A549 (cell line): ENCODE measurements at regions of chr3 and their contacts with region 1.

Region 1: DNA sequence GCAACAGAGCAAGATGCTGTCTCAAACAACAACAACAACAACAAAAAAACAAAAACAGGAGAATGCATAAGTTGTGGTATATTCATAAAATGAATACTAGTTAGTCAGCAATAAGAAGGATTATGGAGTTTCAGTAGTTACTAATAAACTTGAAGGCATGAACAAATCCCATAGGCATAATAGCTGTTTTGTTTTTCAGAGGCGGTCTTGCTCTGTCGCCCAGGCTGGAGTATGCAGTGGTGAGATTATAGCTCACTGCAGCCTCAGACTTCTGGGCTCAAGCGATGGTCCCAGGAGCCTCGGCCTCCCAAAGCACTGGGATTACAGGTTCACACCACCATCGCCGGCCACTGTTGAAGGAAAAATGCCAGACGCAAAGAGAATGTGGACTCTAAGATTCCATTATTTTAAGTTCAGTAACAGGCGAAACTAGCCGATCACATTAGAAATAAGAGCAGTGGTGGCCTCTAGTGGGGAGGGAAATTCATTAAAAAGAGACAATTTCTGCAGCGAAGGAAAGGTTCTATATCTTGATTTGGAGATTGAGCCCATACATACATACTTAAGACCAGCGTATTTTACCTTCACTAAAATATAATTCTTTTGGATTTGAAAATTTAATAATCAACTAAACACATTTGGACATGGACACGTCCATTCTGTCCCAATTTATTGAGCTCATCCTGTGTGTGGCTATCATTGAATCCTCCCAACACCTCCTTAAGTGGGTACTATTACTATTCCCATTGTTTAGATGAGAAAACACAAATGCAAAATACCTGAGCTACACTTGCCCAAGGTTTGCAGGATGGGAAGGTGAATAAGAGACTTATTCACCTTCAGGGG is 27.4 kb upstream of the HDAC11 start:
- DNase-seq: peak; percentile 55 to 66
- ATAC-seq: peak; percentile 70 to 74
- H3K4me3 ChIP-seq: peak overlapping the region; percentile 55
- H3K27ac ChIP-seq: peak overlapping the region; percentile 72 to 86
- H3K4me1 ChIP-seq: 0 out of 3 replicates have a peak, but pooled peaks cover 5% of the 10 kb centered on the region
- CTCF ChIP-seq: peak; percentile 85
- EP300 ChIP-seq: no peak
- POLR2A ChIP-seq: no peak
- RAD21 ChIP-seq: peak; percentile 83 to 84

Region 2: GRCh38 chr3:13282986-13283876 is 169.5 kb before region 1 on chr3:
- CTCF ChIA-PET with region 1: interaction called, 29 read pairs
- POLR2A ChIA-PET with region 1: no interaction called
- DNase-seq: peak; percentile 63 to 64
- ATAC-seq: peak; percentile 63 to 74
- H3K4me3 ChIP-seq: peak overlapping the region; percentile 83
- H3K27ac ChIP-seq: peak overlapping the region; percentile 71 to 83
- H3K4me1 ChIP-seq: peaks cover 6% of the 10 kb centered on the region; the same call in 1 of the 3 replicates
- CTCF ChIP-seq: peak; percentile 32; the same call in 2 of the 3 replicates
- EP300 ChIP-seq: no peak
- POLR2A ChIP-seq: no peak
- RAD21 ChIP-seq: peak; percentile 27 to 38; a peak in 3 of 5 replicates

Region 3: GRCh38 chr3:13379201-13379830 is 73.4 kb before region 1 on chr3:
- CTCF ChIA-PET with region 1: interaction called, 10 read pairs
- POLR2A ChIA-PET with region 1: no interaction called
- DNase-seq: no peak
- ATAC-seq: peak in 1 of 2 experiments; percentile 36; a peak in 2 of 6 replicates
- H3K4me3 ChIP-seq: no peak overlapping the region
- H3K27ac ChIP-seq: no peak overlapping the region
- H3K4me1 ChIP-seq: no peaks in the 10 kb centered on the region
- CTCF ChIP-seq: no peak
- EP300 ChIP-seq: no peak
- POLR2A ChIP-seq: no peak
- RAD21 ChIP-seq: no peak

Region 4: DNA sequence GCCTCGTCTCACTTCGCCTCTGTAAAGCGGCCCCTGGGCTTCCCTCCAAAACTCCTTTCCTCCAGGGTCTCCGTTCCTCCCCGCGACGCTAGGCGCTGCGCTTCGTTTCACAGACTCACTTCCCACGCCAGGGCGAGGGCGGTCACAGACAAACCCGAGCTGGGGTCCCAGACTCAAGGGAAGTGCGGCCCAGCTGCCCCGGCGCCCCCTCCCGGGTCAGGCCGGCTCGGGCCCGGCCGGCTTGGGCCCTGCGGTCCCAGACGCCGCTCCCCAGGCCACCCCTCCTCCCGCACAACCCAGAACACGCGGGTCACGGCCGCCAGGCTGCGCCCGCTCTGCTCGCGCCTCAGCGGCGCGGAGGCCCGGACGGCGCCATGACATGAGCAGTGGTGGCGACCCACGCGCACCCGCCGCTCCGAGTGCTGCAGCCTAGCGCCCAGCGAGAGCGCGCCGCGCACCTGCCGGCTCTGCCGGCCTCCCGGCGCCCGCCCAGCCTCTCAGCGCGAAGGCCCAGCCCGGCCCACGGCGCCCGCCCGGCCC is 33.1 kb before region 1 on chr3:
- CTCF ChIA-PET with region 1: interaction called, 36 read pairs
- POLR2A ChIA-PET with region 1: interaction called, 4 read pairs
- DNase-seq: peak; percentile 48 to 51
- ATAC-seq: peak; percentile 82 to 84
- H3K4me3 ChIP-seq: peak overlapping the region; percentile 81
- H3K27ac ChIP-seq: peak overlapping the region; percentile 81 to 96
- H3K4me1 ChIP-seq: peaks cover 15% of the 10 kb centered on the region
- CTCF ChIP-seq: peak; percentile 10; the same call in 1 of the 3 replicates
- EP300 ChIP-seq: no peak
- POLR2A ChIP-seq: no peak
- RAD21 ChIP-seq: no peak

Region 5: DNA sequence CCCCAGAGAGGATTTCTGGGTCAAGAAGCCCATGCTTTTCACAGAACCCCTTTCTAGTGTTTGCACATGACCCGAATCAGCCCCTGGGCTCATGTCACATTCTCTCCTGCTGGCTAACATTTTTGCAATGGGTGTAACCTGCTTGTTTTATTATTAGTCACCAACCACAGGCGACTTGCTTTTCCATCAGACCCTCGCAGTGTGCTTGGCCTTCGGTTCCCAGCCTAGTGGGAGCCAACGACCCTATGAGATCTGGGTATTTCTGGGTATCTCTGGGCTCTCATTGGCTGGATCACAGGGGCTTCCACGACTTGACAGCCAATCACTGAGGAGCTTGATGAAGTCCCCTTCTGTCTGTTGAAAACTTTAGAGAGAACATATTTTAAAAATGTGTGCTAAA is 85.2 kb after region 1 on chr3:
- CTCF ChIA-PET with region 1: no interaction called
- POLR2A ChIA-PET with region 1: no interaction called
- DNase-seq: peak; percentile 72 to 84
- ATAC-seq: peak; percentile 73 to 87
- H3K4me3 ChIP-seq: no peak overlapping the region
- H3K27ac ChIP-seq: peak overlapping the region; percentile 63 to 83
- H3K4me1 ChIP-seq: peaks cover 45% of the 10 kb centered on the region
- CTCF ChIP-seq: no peak
- EP300 ChIP-seq: 0 out of 5 replicates have a peak, but pooled peaks of 1 of the 2 experiments have one; percentile 20
- POLR2A ChIP-seq: no peak
- RAD21 ChIP-seq: no peak

Region 6: DNA sequence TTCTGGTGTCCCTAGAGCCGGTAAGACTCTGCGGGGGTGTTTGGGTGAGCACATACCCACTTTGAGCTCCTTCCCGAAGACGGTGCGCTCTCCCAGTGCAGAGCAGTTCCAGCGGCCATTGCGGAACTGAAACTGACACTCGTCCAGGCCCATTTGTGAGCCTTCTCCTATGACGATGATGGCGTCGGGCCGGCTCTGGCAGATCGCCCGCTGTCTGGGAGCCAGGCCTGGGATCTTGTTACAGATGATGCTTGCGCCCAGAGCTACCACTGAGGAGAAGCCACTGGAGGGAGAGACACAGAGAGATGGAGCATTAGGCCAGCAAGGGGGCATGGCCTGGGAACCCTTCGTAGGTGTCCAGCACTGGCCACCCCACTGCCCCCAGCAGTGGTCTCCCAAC is 422.2 kb after region 1 on chr3:
- CTCF ChIA-PET with region 1: no interaction called
- POLR2A ChIA-PET with region 1: no interaction called
- DNase-seq: no peak
- ATAC-seq: no peak
- H3K4me3 ChIP-seq: no peak overlapping the region
- H3K27ac ChIP-seq: no peak overlapping the region
- H3K4me1 ChIP-seq: peaks cover 14% of the 10 kb centered on the region
- CTCF ChIP-seq: no peak
- EP300 ChIP-seq: no peak
- POLR2A ChIP-seq: no peak
- RAD21 ChIP-seq: no peak